Mammary epithelial cell (primary cell): ENCODE measurements at regions of chr17 and their contacts with region 1.

Region 1: GRCh38 chr17:79272666-79273219 is 198.1 kb downstream of the ENGASE start:
- DNase-seq: peak; percentile 55
- H3K4me3 ChIP-seq: no peak overlapping the region
- H3K27ac ChIP-seq: no peak overlapping the region
- H3K4me1 ChIP-seq: peaks cover 10% of the 10 kb centered on the region
- H3K27me3 ChIP-seq: peaks cover 5% of the 10 kb centered on the region
- CTCF ChIP-seq: peak in 1 of 2 donors; percentile 49

Region 2: GRCh38 chr17:79201536-79202227 is 71.1 kb before region 1 on chr17:
- CTCF ChIA-PET with region 1: no interaction called
- dilution Hi-C with region 1: no loop called
- in situ Hi-C with region 1: no loop called
- intact Hi-C with region 1: loop called (anchors 5 kb)
- DNase-seq: peak; percentile 23
- H3K4me3 ChIP-seq: no peak overlapping the region
- H3K27ac ChIP-seq: no peak overlapping the region
- H3K4me1 ChIP-seq: peaks cover 5% of the 10 kb centered on the region
- H3K27me3 ChIP-seq: peaks cover 6% of the 10 kb centered on the region
- CTCF ChIP-seq: no peak

Region 3: GRCh38 chr17:79231766-79232287 is 40.9 kb before region 1 on chr17:
- CTCF ChIA-PET with region 1: no interaction called
- dilution Hi-C with region 1: loop called (anchors 5 kb)
- in situ Hi-C with region 1: no loop called
- intact Hi-C with region 1: loop called (anchors 1 kb)
- DNase-seq: peak; percentile 71
- H3K4me3 ChIP-seq: no peak overlapping the region
- H3K27ac ChIP-seq: peak overlapping the region; percentile 40
- H3K4me1 ChIP-seq: peaks cover 31% of the 10 kb centered on the region
- H3K27me3 ChIP-seq: no peaks in the 10 kb centered on the region
- CTCF ChIP-seq: no peak

Region 4: GRCh38 chr17:79252886-79253285 is 19.9 kb before region 1 on chr17:
- CTCF ChIA-PET with region 1: no interaction called
- dilution Hi-C with region 1: no loop called
- in situ Hi-C with region 1: no loop called
- intact Hi-C with region 1: loop called (anchors 2 kb)
- DNase-seq: no peak
- H3K4me3 ChIP-seq: no peak overlapping the region
- H3K27ac ChIP-seq: no peak overlapping the region
- H3K4me1 ChIP-seq: peaks cover 9% of the 10 kb centered on the region
- H3K27me3 ChIP-seq: no peaks in the 10 kb centered on the region
- CTCF ChIP-seq: no peak